ENCODE measurements at regions of chr11 and their contacts with region 1.

Region 1: GRCh38 chr11:47998733-47999359 is 18.5 kb downstream of the PTPRJ start:
- DNase-seq: peak; percentile 51 to 86 (median 68)
- ATAC-seq: peak; percentile 65 to 86 (median 80)
- H3K4me3 ChIP-seq: peak overlapping the region in 1 of 3 donors; percentile 17
- H3K27ac ChIP-seq: peak overlapping the region; percentile 56 to 92 (median 56)
- H3K4me1 ChIP-seq: peaks cover 0 to 87% (median 39%) of the 10 kb centered on the region in 4 donors
- H3K27me3 ChIP-seq: no peaks in the 10 kb centered on the region
- CTCF ChIP-seq: no peak
- POLR2A ChIP-seq: peak; percentile 64

Region 2: DNA sequence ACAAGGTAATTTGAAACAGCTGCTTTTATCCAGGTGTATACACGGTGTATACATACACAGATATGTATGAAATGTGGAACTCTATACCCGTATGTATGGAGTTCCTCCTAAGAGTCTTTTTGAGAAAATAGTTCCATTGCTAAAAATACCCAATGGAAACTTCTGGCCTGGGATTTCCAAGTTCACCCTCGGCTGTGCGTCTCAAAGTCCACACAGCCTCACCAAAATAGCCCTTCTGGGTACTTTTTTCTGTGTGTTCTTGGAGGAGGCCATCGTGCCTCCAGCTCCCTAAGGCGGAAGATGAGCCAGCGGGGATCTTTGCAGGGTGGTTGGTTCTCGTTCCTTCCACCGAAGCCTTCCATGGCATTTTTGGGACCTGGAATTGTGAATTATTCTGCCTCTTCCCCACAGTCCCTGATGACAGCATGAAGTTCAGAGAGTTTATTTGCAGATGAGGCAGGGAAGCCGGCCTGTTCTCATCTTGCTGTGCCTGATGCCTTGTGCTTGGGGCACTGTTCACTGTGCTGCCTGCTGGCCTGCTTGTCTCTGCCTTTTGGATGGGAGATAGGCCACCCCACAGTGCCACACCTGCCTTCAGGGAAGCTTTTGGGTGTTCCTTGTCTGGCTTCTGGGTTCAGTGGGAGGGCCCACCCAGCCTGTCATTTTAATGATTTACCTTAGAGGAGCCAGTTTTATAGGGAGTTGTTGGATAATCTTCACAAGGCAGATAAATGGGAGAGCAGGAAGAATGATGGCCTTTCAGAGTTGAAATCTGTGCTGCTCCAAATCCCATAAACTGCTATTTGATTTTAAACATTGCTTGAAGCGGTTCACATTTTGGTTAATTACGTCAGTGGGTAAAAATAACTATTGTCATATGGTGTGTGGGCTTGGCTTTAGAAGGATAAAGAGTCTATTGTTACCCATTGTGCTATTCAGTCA is 105.0 kb after region 1 on chr11:
- intact Hi-C with region 1: loop called in 1 of 2 experiments (anchors 5 kb)
- DNase-seq: peak; percentile 48 to 79 (median 61)
- ATAC-seq: peak; percentile 32 to 58 (median 44)
- H3K4me3 ChIP-seq: no peak overlapping the region
- H3K27ac ChIP-seq: peak overlapping the region; percentile 22 to 94 (median 80)
- H3K4me1 ChIP-seq: peaks cover 0 to 85% (median 29%) of the 10 kb centered on the region in 4 donors
- H3K27me3 ChIP-seq: no peaks in the 10 kb centered on the region
- CTCF ChIP-seq: no peak
- POLR2A ChIP-seq: no peak